ENCODE measurements at regions of chr2 and their contacts with region 1.

Region 1: DNA sequence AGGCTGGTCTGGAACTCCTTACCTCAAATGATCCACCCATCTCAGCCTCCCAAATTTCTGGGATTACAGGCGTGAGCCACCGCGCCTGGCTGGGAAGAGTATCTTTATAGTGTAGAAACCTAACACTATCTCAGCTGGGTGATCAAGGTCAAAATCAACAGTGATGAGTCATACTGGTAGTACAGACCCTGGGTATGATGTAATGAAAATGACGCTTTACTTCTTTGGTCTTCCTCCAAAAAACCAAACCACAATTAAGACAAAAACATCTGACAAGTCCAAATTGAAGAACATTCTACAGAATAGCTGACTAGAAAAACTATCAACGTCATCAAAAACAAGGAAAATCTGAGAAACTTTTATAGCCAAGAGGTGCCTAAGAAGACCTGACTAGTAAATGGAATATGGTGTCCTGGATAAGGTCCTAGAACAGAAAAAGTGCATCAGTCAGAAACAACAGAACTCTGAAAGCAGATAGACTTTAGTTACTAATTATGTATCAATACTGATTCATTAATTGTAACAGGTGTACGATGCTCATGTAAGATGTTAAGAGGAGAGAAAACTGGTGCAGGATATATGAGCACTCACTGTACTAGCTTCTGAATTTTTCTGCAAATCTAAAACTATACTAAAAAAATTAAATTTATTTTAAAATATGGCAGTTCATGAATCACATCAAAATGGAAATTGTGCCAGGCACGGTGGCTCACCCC is 25.4 kb downstream of the PDCL3 start:
- DNase-seq: peak; percentile 28
- H3K4me3 Mint-ChIP-seq: no peak overlapping the region
- H3K27ac Mint-ChIP-seq: peak overlapping the region; percentile 60
- H3K4me1 Mint-ChIP-seq: peaks cover 57% of the 10 kb centered on the region
- H3K27me3 Mint-ChIP-seq: peaks cover 2% of the 10 kb centered on the region

Region 2: GRCh38 chr2:100113990-100114433 is 474.2 kb before region 1 on chr2:
- intact Hi-C with region 1: no loop called
- DNase-seq: no peak
- H3K4me3 Mint-ChIP-seq: no peak overlapping the region
- H3K27ac Mint-ChIP-seq: no peak overlapping the region
- H3K4me1 Mint-ChIP-seq: peaks cover 9% of the 10 kb centered on the region
- H3K27me3 Mint-ChIP-seq: peaks cover 6% of the 10 kb centered on the region

Region 3: GRCh38 chr2:100562732-100563720 is 25.2 kb before region 1 on chr2 and contains the start of gene PDCL3:
- intact Hi-C with region 1: loop called (anchors 2 kb)
- DNase-seq: peak; percentile 94
- H3K4me3 Mint-ChIP-seq: peak within 1 kb of the TSS; percentile 88
- H3K27ac Mint-ChIP-seq: peak within 1 kb of the TSS; percentile 99
- H3K4me1 Mint-ChIP-seq: peaks cover 36% of the 10 kb centered on the region
- H3K27me3 Mint-ChIP-seq: no peaks in the 10 kb centered on the region
- total RNA-seq, gene PDCL3: 42.5 and 48.8 TPM in 2 replicates